ENCODE measurements at regions of chr3 and their contacts with region 1.

Region 1: GRCh38 chr3:108589146-108589997 is at the starts of genes CIP2A and DZIP3:
- DNase-seq: peak; percentile 90
- H3K4me3 Mint-ChIP-seq: peak within 1 kb of the TSS; percentile 99
- H3K27ac Mint-ChIP-seq: peak within 1 kb of the TSS; percentile 99
- H3K4me1 Mint-ChIP-seq: peaks cover 29% of the 10 kb centered on the region
- H3K27me3 Mint-ChIP-seq: no peaks in the 10 kb centered on the region
- total RNA-seq, gene CIP2A: 39.5 to 45.1 TPM
- total RNA-seq, gene DZIP3: 11.3 to 11.4 TPM

Region 2: DNA sequence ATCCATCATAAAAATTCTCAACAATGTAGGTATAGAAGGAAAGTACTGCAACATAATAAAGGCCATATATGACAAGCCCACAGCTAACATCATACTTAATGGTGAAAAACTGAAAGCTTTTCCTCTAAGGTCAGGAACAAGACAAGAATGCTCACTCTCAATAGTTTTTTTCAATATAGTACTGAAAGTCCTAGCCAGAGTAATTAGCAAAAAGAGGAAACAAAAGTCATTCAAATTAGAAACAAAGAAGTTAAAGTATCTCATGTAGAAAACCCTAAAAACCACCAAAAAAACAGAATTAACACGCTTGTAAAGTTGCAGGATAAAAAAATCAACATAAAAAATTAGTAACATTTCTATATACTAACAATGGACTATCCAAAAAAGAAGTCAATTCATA is 140.8 kb before region 1 on chr3:
- CTCF ChIA-PET with region 1: no interaction called
- POLR2A ChIA-PET with region 1: no interaction called
- intact Hi-C with region 1: no loop called
- DNase-seq: no peak
- H3K4me3 Mint-ChIP-seq: no peak overlapping the region
- H3K27ac Mint-ChIP-seq: no peak overlapping the region
- H3K4me1 Mint-ChIP-seq: no peaks in the 10 kb centered on the region
- H3K27me3 Mint-ChIP-seq: peaks cover 5% of the 10 kb centered on the region

Region 3: GRCh38 chr3:108578064-108578463 is 11.3 kb before region 1 on chr3:
- CTCF ChIA-PET with region 1: no interaction called
- POLR2A ChIA-PET with region 1: interaction called, 5 read pairs
- intact Hi-C with region 1: loop called (anchors 1 kb)
- DNase-seq: no peak
- H3K4me3 Mint-ChIP-seq: no peak overlapping the region
- H3K27ac Mint-ChIP-seq: no peak overlapping the region
- H3K4me1 Mint-ChIP-seq: peaks cover 7% of the 10 kb centered on the region
- H3K27me3 Mint-ChIP-seq: no peaks in the 10 kb centered on the region

Region 4: DNA sequence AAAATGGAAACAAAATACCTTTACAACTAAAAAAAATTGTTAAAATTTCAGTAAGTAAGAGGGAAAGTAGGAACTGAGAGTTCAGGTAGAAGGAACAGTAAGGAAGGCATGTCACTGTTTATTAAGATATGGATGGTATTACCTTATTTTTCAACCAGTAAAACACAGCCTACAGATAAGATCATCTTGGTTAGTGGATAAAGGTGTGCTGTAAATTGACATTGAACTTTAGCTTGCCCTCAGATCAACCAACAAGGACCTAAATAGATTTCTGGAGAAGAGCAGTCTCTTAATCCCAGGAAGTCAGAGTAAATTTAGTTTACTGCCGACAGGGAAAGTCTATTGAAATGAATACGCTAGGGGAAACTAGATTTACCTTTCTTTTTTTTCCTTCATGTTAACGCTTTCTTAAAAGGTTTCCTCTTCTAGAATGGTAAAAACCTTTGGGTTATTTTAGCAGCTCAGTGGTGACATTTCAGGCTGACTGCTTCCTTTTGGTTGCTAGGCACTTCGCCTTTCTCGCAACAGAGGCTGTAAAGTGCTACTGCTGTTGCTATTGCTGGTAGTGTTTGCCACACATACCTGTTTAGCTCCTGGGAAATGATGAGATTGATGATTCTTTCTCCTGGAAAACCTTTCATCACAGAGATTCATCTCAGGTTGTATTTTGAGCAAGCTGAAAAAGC is 13.0 kb after region 1 on chr3:
- CTCF ChIA-PET with region 1: interaction called, 32 read pairs
- POLR2A ChIA-PET with region 1: interaction called, 27 read pairs
- intact Hi-C with region 1: loop called (anchors 1 kb)
- DNase-seq: peak; percentile 50
- H3K4me3 Mint-ChIP-seq: no peak overlapping the region
- H3K27ac Mint-ChIP-seq: no peak overlapping the region
- H3K4me1 Mint-ChIP-seq: peaks cover 44% of the 10 kb centered on the region
- H3K27me3 Mint-ChIP-seq: no peaks in the 10 kb centered on the region

Measured in activated CD4-positive, alpha-beta memory T cell treated with anti-CD3 and anti-CD28 coated beads for 36 hours (primary cell).